CD4-positive, alpha-beta memory T cell (primary cell): ENCODE measurements at regions of chr11 and their contacts with region 1.

Region 1: DNA sequence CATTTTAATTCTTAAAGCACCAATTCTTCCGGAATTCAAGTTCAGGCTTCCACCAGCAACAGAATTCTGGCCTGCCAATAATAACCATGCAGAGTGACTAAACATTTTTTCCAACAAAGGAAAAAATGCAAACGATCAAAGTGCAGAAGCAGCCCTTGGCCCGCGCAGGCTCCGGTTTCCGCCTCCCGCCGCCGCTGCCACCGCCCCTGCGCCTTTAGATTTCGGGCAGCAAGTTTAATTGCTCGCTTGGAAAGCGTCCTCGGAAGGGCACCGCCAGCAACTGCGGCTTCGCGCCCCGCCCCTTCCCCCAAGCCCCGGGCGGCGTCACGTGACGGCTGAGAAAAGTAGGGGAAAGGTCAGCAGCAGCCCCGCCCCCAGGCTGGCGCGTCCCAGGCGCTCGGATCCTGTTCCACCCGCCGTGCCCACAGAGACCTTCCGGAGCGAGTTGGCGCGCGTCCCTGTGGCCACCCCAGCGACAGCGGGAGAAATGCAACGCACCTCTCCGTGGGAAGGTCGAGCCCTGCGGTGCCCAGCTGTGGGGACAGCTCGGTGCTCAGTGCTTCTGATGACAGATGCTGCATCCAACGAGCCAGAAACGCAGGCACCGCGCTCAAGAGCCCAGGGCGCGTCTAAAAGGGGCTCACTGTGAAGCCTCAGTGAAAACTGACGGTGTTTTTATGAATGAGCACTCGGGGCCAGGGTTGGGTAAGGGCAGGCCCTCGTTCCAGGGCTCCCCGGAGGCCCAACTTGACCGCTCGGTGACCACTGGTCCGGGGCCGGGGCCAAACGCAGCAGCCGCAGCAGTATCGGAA is 2.5 kb downstream of the CPT1A start:
- DNase-seq: peak; percentile 93 to 96 (median 95)
- H3K4me3 ChIP-seq: peak overlapping the region; percentile 58 to 67
- H3K4me3 Mint-ChIP-seq: peak overlapping the region; percentile 83 to 93 (median 88)
- H3K27ac ChIP-seq: peak overlapping the region; percentile 67
- H3K27ac Mint-ChIP-seq: peak overlapping the region; percentile 90 to 98 (median 95)
- H3K4me1 ChIP-seq: peaks cover 81% of the 10 kb centered on the region
- H3K4me1 Mint-ChIP-seq: peaks cover 27 to 75% (median 56%) of the 10 kb centered on the region in 4 donors
- H3K27me3 ChIP-seq: no peaks in the 10 kb centered on the region
- H3K27me3 Mint-ChIP-seq: no peaks in the 10 kb centered on the region

Region 2: GRCh38 chr11:68459886-68460740 is 379.1 kb before region 1 on chr11:
- CTCF ChIA-PET with region 1: no interaction called
- POLR2A ChIA-PET with region 1: no interaction called
- intact Hi-C with region 1: loop called (anchors 10 kb)
- DNase-seq: peak; percentile 95 to 97 (median 96)
- H3K4me3 ChIP-seq: peak overlapping the region; percentile 75 to 90
- H3K4me3 Mint-ChIP-seq: peak overlapping the region; percentile 93 to 99 (median 95)
- H3K27ac ChIP-seq: peak overlapping the region; percentile 93
- H3K27ac Mint-ChIP-seq: peak overlapping the region; percentile 98 to 100 (median 99)
- H3K4me1 ChIP-seq: peaks cover 44% of the 10 kb centered on the region
- H3K4me1 Mint-ChIP-seq: peaks cover 22 to 44% (median 32%) of the 10 kb centered on the region in 4 donors
- H3K27me3 ChIP-seq: no peaks in the 10 kb centered on the region
- H3K27me3 Mint-ChIP-seq: peaks cover 0 to 6% of the 10 kb centered on the region in 2 donors

Region 3: GRCh38 chr11:68751004-68751856 is 88.0 kb before region 1 on chr11 and contains the start of gene TESMIN:
- CTCF ChIA-PET with region 1: interaction called, 10 read pairs
- POLR2A ChIA-PET with region 1: interaction called, 3 read pairs
- intact Hi-C with region 1: loop called (anchors 2 kb)
- DNase-seq: peak; percentile 84 to 89 (median 87)
- H3K4me3 ChIP-seq: peak within 1 kb of the TSS in 1 of 2 donors; percentile 62
- H3K4me3 Mint-ChIP-seq: peak within 1 kb of the TSS; percentile 71 to 84 (median 82)
- H3K27ac ChIP-seq: no peak within 1 kb of the TSS
- H3K27ac Mint-ChIP-seq: peak within 1 kb of the TSS; percentile 34 to 88 (median 77)
- H3K4me1 ChIP-seq: peaks cover 4% of the 10 kb centered on the region
- H3K4me1 Mint-ChIP-seq: peaks cover 8 to 27% (median 14%) of the 10 kb centered on the region in 4 donors
- H3K27me3 ChIP-seq: no peaks in the 10 kb centered on the region
- H3K27me3 Mint-ChIP-seq: no peaks in the 10 kb centered on the region
- total RNA-seq, gene TESMIN: 5.7 to 5.8 TPM

Region 4: GRCh38 chr11:68816917-68817419 is 22.3 kb before region 1 on chr11:
- CTCF ChIA-PET with region 1: interaction called, 85 read pairs
- POLR2A ChIA-PET with region 1: interaction called, 8 read pairs
- intact Hi-C with region 1: no loop called
- DNase-seq: peak in 2 of 5 donors; percentile 9 to 14
- H3K4me3 ChIP-seq: no peak overlapping the region
- H3K4me3 Mint-ChIP-seq: peak overlapping the region in 6 of 8 donors; percentile 29 to 76 (median 52)
- H3K27ac ChIP-seq: no peak overlapping the region
- H3K27ac Mint-ChIP-seq: peak overlapping the region; percentile 70 to 90 (median 84)
- H3K4me1 ChIP-seq: peaks cover 19% of the 10 kb centered on the region
- H3K4me1 Mint-ChIP-seq: peaks cover 21 to 44% (median 34%) of the 10 kb centered on the region in 4 donors
- H3K27me3 ChIP-seq: no peaks in the 10 kb centered on the region
- H3K27me3 Mint-ChIP-seq: no peaks in the 10 kb centered on the region

Region 5: DNA sequence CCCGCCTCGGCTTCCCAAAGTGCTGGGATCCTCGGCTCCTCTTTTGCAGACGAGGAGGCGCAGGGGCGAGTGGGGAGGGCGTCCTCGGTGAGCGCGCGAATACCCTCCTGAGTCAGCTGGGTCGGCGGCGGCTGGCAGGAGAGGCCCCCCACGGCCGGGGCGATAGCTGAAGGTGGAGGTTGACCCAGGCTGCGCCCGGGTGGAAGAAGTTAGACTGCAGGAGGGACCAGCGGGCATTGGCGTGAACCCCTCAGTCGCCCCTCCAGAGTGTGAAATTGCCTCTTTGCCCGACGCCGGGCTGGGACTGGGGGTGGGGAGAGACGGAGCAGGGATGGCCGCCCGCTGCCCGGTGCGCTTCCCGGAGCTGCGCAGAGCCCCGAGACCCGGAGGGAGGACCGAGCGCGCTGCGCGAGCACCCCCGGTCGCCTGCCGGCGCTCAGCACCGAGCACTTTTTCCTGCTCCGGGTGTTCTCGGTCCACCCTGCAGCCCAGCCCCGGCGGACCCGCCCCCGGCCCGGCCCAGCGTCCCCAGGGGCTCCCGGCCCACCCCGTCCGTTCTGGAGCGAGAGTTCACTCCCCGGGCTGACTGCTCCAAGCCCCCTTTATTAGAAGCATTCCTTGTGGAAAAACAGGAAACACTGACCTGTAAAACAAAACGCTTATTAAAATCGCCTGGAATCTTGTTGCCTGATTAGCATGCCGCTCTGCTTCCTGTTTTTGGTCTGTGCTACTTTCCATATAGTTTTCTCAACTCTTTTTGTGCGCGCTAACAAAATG is 16.1 kb after region 1 on chr11:
- CTCF ChIA-PET with region 1: interaction called, 22 read pairs
- POLR2A ChIA-PET with region 1: interaction called, 16 read pairs
- intact Hi-C with region 1: no loop called
- DNase-seq: peak in 1 of 5 donors; percentile 23
- H3K4me3 ChIP-seq: peak overlapping the region in 1 of 2 donors; percentile 38
- H3K4me3 Mint-ChIP-seq: peak overlapping the region; percentile 59 to 79 (median 74)
- H3K27ac ChIP-seq: no peak overlapping the region
- H3K27ac Mint-ChIP-seq: no peak overlapping the region
- H3K4me1 ChIP-seq: peaks cover 11% of the 10 kb centered on the region
- H3K4me1 Mint-ChIP-seq: peaks cover 0 to 11% (median 2%) of the 10 kb centered on the region in 4 donors
- H3K27me3 ChIP-seq: peaks cover 13% of the 10 kb centered on the region
- H3K27me3 Mint-ChIP-seq: peaks cover 18 to 21% of the 10 kb centered on the region in 2 donors